AG04449 (cell line): ENCODE measurements at regions of chr21 and their contacts with region 1.

Region 1: DNA sequence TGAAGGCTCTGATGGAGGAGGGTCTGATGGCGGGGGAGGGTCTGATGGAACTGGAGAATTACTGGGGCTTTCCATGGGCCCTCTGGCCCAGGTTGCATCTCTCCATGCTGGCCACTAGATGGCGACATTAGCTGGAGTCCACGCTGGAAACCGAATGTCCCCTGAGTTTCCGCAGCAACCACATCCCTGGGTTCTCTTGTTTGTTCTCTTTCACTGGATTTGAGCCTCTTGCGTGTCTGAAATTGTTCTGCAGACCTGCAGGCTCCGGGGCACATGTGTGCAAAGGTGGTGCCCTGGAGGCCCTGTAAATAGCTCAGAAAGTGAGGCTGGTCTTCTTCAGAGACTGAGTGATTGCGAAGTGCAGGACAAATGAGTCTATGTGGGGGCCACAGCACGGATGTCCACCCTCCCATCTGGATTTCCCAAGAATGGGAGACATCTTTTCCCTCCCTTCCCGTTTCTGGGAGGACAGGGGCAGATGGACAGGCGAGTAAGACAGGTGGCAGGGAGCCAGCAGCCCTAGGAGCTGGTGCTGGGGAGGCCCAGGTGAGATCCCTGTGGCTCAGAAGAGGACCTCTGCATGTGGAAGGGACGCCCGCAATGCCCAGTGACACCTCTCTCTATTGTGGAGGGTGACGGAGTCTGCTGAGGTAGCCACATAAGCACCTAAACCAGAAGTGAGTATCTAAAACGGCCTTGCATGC is 73.2 kb upstream of the ABCG1 start:
- DNase-seq: no peak
- H3K4me3 ChIP-seq: no peak overlapping the region
- CTCF ChIP-seq: peak; percentile 87

Region 2: DNA sequence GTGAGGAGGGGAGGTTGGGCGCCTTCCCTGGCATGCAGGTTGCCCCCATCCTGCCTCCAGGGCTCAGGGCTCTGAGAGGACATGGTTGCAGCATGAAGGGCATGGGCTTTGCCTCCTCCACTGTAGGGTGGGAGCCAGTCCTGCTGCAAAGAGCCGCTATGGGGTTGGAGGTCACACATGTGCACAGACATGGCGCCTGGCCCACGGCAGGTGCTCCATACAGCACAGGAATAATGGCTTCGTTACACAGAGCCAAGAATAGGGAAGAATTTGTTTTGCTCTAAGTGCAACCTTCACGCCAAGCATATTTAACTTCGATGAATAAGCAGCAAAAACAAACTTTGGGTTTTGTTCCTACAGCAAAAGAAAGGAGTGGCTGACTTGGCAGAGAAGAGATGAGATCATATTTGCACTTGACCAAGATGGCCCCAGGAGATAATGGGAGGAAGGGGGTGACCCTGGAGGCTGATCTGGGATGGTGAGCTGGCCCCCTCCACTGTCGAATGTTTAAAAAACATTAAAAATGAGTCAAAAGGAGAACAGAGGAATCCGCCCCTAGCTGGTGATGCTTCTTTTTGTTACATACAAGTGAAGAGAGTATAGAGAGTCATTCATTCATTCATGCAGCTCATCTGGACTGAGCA is 179.6 kb before region 1 on chr21:
- CTCF ChIA-PET with region 1: no interaction called
- POLR2A ChIA-PET with region 1: no interaction called
- DNase-seq: no peak
- H3K4me3 ChIP-seq: no peak overlapping the region
- CTCF ChIP-seq: no peak

Region 3: GRCh38 chr21:42125571-42126544 is 19.9 kb before region 1 on chr21:
- CTCF ChIA-PET with region 1: interaction called, 20 read pairs
- POLR2A ChIA-PET with region 1: no interaction called
- DNase-seq: no peak
- H3K4me3 ChIP-seq: no peak overlapping the region
- CTCF ChIP-seq: peak; percentile 26

Region 4: DNA sequence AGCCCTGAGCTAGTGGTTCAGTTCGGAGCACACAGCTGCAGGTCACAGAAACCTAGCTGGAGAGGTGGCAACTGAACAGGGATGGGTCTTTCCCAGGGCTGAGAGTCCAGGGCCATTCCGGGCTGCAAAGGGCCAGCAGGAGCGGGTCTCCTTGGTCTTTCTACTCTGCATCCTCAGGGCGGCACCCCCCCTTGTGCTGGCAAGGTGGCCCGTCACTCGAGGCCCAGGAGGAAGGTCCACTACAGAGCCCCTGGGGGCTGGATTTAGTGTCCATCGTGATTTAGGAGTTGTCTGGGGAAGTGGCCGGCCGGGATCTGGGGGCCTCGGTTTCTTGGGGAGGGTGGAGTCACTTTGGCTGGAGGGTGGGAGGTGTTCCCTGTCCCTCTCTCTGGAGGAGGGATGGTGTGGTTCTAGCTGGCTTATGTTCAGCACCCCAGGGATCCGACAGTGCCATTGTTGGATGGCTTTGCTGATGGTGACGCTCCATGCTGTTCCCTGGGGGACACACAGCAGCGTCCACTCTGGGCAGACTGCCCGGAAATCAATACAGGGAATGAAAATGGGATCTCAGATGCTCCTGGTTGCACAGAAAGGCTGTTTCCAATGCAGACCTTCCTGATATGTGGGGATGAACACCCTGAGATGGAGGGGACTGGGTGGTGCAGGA is 10.2 kb before region 1 on chr21:
- CTCF ChIA-PET with region 1: interaction called, 20 read pairs
- POLR2A ChIA-PET with region 1: no interaction called
- DNase-seq: no peak
- H3K4me3 ChIP-seq: no peak overlapping the region
- CTCF ChIP-seq: no peak

Region 5: GRCh38 chr21:42160111-42160721 is 14.5 kb after region 1 on chr21:
- CTCF ChIA-PET with region 1: interaction called, 13 read pairs
- POLR2A ChIA-PET with region 1: no interaction called
- DNase-seq: no peak
- H3K4me3 ChIP-seq: no peak overlapping the region
- CTCF ChIP-seq: no peak

Region 6: DNA sequence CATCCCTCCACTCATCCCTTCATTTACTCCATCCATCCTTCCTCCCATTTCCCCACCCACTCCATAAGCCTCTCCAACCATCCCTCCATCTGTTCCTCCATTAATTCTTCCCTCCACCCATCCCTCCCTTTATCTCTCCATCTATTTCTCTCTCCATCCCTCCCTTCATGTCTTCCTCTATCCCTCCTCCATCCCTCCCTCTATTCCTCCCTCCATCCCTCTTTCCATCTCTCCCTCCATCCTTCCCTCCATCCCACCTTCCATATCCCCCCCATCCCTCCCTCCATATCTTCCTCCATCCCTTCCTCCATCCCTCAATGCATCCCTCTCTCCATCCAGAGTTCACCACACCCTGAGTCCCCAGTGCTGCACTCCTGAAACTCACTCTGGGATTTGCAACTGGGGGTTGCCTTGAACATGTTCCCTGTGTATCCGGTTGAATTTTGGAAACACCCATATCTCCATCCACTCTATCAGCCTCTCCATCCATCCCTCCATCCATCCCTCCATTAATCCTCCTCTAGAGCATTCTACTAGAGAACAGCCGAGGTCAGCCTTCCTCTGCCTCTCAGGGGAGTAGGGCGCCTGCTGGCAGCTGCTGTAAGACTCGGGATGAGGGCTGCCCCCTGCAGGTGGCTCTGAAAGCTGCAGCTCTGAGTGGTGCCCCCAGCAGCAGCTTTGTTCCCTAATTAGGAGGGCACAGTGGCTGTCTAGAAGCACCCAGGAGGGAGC is 112.6 kb after region 1 on chr21:
- CTCF ChIA-PET with region 1: interaction called, 96 read pairs
- POLR2A ChIA-PET with region 1: no interaction called
- DNase-seq: no peak
- H3K4me3 ChIP-seq: no peak overlapping the region
- CTCF ChIP-seq: peak; percentile 81

Region 7: GRCh38 chr21:42381334-42381984 is 235.7 kb after region 1 on chr21:
- CTCF ChIA-PET with region 1: interaction called, 19 read pairs
- POLR2A ChIA-PET with region 1: no interaction called
- DNase-seq: no peak
- H3K4me3 ChIP-seq: no peak overlapping the region
- CTCF ChIP-seq: peak; percentile 78